Activated CD8-positive, alpha-beta T cell treated with anti-CD3 and anti-CD28 coated beads, Interleukin-2, amount 10 ng/mL, durations not matched to agents 7 days and 5 days (primary cell): ENCODE measurements at regions of chr17 and their contacts with region 1.

Region 1: GRCh38 chr17:40113110-40113906 is 8.5 kb upstream of the MSL1 start:
- DNase-seq: peak; percentile 97
- ATAC-seq: peak; percentile 90
- H3K4me3 Mint-ChIP-seq: peak overlapping the region; percentile 85
- H3K27ac Mint-ChIP-seq: peak overlapping the region; percentile 91
- H3K4me1 Mint-ChIP-seq: peaks cover 65% of the 10 kb centered on the region
- H3K27me3 Mint-ChIP-seq: no peaks in the 10 kb centered on the region

Region 2: GRCh38 chr17:39769974-39770587 is 343.2 kb before region 1 on chr17:
- CTCF ChIA-PET with region 1: no interaction called
- POLR2A ChIA-PET with region 1: no interaction called
- DNase-seq: peak; percentile 60
- ATAC-seq: peak; percentile 86
- H3K4me3 Mint-ChIP-seq: peak overlapping the region; percentile 17
- H3K27ac Mint-ChIP-seq: peak overlapping the region; percentile 82
- H3K4me1 Mint-ChIP-seq: peaks cover 92% of the 10 kb centered on the region
- H3K27me3 Mint-ChIP-seq: no peaks in the 10 kb centered on the region

Region 3: DNA sequence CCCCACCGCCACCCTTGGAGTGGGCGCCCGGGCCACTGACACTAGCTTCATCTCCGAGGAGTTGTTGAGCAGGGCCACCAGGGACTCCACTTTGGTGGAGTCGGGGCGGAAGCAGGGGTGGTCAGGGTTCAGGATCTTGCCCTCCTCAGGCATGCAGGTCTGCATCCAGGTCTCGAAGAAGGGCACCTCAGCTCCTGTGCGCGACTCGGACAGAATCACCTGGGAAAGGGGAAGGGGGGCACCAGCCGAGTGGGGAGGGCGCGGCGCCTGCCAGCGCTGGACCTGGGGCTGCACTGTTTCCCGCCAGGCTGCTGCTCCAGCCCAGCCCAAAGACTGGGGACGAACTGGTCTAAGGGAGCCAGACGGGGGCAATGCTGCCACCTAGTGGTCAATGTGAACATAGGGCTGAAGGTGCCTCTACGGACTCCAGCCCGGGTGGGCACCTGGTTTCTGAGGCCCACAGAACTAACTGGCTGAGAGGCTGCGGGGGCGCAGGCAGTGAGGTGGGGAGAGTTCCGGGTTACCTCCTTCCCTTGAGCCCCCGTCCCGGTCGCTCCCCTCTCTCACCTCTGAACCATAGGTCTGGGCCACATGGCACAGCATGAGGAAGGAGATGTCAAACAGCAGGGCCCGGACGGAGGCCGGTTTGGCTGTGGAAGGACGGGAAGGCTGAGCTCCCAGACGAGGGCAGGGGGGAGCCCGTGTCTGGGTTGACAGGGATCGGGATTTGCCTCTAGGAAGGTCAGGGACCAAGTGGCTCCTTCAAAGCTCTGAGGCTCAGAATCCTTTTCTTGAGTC is 86.3 kb before region 1 on chr17:
- CTCF ChIA-PET with region 1: interaction called, 11 read pairs
- POLR2A ChIA-PET with region 1: interaction called, 3 read pairs
- DNase-seq: peak; percentile 85
- ATAC-seq: peak; percentile 91
- H3K4me3 Mint-ChIP-seq: no peak overlapping the region
- H3K27ac Mint-ChIP-seq: no peak overlapping the region
- H3K4me1 Mint-ChIP-seq: peaks cover 23% of the 10 kb centered on the region
- H3K27me3 Mint-ChIP-seq: no peaks in the 10 kb centered on the region

Region 4: DNA sequence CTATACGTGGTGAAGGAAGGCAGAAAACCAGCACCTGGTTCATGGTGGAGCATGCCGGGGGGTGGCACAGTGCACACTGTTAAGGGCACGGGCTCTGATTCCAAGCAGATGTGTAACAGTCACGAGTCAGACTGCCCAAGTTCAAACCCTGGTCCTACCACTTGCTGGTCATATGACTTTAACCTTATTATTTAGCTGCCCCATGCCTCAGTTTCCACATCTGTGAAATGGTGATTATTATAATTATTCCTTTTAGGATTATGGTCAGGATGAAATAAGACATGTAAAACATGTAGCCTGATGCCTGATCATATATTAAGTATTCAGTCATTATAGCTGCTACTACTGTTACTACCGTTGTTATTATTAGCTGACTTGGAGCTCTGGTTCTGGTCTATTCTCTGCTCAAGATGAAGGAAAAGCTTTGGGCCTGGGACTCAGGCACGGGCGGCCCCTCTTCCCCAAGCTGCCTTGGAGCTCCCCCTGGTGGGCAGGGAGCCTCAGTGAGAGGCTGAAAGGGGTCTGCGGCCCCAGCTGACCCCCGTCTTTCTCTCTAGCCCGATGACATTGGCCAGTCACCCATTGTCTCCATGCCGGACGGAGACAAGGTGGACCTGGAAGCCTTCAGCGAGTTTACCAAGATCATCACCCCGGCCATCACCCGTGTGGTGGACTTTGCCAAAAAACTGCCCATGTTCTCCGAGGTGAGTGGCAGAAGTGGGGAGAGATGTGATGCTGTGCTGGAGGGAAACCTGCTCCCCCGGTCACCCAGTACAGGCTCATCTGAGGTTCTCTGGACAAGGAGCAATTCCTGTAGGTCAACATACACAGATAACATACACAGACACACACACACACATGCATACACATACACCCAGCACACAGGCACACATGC is 26.9 kb before region 1 on chr17:
- CTCF ChIA-PET with region 1: interaction called, 22 read pairs
- POLR2A ChIA-PET with region 1: no interaction called
- DNase-seq: peak; percentile 60
- ATAC-seq: peak; percentile 48
- H3K4me3 Mint-ChIP-seq: no peak overlapping the region
- H3K27ac Mint-ChIP-seq: no peak overlapping the region
- H3K4me1 Mint-ChIP-seq: no peaks in the 10 kb centered on the region
- H3K27me3 Mint-ChIP-seq: no peaks in the 10 kb centered on the region

Region 5: DNA sequence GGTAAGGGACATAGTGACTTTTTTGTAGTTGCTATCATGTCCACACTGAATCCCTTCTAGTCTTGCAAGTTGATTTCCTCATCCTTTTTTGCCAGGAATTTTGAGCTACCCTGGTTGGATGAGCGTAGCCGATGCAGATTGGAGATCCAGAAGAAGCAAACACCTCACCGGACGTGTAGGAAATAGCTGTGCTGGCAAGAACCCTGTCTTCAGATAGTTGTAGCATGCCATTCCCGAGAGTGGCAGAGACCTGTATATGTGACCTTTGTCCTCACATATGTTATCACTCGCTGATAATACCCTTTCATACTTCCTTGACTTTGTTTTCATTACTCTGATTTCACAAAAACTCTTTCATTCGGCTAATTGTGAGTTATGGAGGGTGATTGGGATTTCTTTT is 20.9 kb after region 1 on chr17:
- CTCF ChIA-PET with region 1: interaction called, 124 read pairs
- POLR2A ChIA-PET with region 1: interaction called, 3 read pairs
- DNase-seq: no peak
- ATAC-seq: no peak
- H3K4me3 Mint-ChIP-seq: no peak overlapping the region
- H3K27ac Mint-ChIP-seq: no peak overlapping the region
- H3K4me1 Mint-ChIP-seq: peaks cover 16% of the 10 kb centered on the region
- H3K27me3 Mint-ChIP-seq: no peaks in the 10 kb centered on the region

Region 6: DNA sequence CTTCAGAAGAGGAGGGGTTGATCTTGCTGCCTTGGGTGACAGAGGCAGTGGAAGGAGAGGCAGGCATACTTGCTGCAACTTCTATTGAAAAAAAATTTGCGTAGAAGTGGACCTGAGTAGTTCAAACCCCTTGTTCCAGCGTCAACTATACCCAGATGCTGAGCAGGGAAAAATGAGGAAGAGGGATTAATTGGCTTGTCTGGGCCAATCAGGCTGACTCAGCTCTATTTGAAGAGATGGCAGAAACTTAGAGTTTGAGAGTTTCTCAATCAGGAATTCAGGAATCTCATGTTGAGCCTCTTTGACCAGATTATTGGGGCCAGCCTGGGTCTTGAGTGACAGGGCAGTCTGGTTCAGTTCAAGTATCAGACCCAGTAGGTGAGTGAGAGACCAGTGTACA is 44.7 kb after region 1 on chr17:
- CTCF ChIA-PET with region 1: interaction called, 10 read pairs
- POLR2A ChIA-PET with region 1: interaction called, 3 read pairs
- DNase-seq: no peak
- ATAC-seq: no peak
- H3K4me3 Mint-ChIP-seq: no peak overlapping the region
- H3K27ac Mint-ChIP-seq: no peak overlapping the region
- H3K4me1 Mint-ChIP-seq: peaks cover 5% of the 10 kb centered on the region
- H3K27me3 Mint-ChIP-seq: no peaks in the 10 kb centered on the region

Region 7: DNA sequence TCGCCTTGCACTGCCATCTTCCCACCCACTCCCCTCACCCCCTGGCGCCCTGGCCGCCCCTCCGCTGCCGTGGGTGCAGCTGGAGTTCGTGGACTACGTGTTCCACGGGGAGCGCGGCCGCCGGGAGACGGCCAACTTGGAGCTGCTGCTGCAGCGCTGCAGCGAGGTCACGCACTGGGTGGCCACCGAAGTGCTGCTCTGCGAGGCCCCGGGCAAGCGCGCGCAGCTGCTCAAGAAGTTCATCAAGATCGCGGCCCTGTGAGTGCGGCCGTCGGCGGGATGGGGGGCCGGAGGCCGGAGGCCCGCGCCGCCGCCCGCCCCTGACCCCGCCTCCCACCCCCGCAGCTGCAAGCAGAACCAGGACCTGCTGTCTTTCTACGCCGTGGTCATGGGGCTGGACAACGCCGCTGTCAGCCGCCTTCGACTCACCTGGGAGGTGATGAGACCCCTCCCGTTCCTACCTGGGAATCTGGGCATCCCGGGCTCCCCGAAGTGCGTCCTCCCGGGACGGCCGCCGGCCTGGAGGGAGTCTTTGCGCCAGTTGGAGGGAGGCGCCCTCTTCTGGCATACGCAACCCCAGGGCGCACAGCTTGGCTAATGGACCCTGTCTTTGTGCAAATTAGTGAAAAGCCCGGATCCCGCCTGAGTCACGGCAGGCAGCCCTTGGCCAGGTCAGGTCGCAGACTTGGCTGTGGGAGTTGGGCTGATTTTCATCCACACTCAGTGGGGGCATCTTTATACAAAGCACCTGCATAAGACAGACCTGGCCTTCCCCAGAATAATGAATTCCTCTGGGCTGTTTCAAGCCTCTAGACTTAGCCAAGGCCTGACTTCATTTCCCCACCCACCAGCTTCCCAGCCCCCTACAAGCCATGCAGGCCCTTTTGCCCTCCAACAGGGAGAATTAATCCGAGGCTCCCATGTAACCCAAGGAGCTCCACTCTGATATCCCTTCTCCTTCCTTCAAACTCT is 78.2 kb after region 1 on chr17:
- CTCF ChIA-PET with region 1: interaction called, 110 read pairs
- POLR2A ChIA-PET with region 1: interaction called, 4 read pairs
- DNase-seq: peak; percentile 74
- ATAC-seq: peak; percentile 90
- H3K4me3 Mint-ChIP-seq: peak overlapping the region; percentile 92
- H3K27ac Mint-ChIP-seq: peak overlapping the region; percentile 66
- H3K4me1 Mint-ChIP-seq: peaks cover 27% of the 10 kb centered on the region
- H3K27me3 Mint-ChIP-seq: peaks cover 5% of the 10 kb centered on the region